Posterior vena cava (tissue), 2 donors: ENCODE measurements at regions of chr11 and their contacts with region 1.

Region 1: GRCh38 chr11:133956650-133957633 is at the start of gene IGSF9B:
- DNase-seq: peak; percentile 93
- total RNA-seq, gene IGSF9B: 45.0 to 57.8 TPM

Region 2: DNA sequence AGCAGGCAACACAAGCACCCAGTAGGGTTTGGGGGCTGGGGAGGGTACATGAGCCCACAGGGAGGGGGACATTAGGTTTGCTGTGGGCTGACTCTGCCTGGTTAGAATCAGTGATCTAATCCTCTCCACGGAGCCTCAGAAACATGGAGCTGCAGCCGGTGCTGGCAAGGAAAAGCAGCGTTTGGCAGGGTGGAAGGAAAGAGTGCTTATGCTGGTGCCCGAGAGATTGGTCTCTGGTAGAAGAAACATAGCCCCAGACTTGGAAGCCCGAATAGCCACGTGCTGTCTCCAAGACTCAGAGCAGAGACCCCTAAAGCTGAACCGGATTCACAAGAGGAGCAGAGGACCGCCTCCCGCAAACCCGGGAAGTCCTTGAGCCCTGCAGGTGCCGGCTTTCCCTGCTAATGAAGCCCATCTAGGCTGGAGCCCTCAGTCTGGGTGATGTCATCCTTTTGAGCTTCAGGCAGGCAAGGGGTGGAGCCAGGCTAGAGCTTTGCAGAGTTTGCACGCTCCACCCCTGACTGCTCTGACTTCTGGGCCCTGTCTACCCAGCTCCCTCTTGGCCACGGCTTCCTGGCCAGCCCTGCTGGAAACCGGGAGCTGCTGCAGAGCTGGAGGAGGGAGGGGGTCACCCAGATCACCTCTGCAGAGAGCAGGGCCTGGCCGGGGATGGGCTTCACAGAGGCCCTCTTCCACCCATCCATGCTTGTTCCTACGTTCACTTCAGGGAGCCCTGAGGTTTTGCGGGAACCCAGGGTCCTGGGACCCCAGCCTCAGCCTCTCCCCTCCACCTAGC is 77.0 kb after region 1 on chr11:
- intact Hi-C with region 1: loop called in 1 of 2 experiments (anchors 5 kb)
- DNase-seq: peak; percentile 93